Prostate gland (tissue), 2 donors: ENCODE measurements at regions of chr15 and their contacts with region 1.

Region 1: GRCh38 chr15:71455107-71455506 is 339.8 kb downstream of the THSD4 start:
- DNase-seq: peak; percentile 36
- H3K4me3 ChIP-seq: no peak overlapping the region
- H3K27ac ChIP-seq: peak overlapping the region; percentile 20 to 55
- H3K4me1 ChIP-seq: peaks cover 3% of the 10 kb centered on the region
- H3K27me3 ChIP-seq: no peaks in the 10 kb centered on the region
- CTCF ChIP-seq: no peak
- POLR2A ChIP-seq: no peak

Region 2: GRCh38 chr15:72155635-72156616 is 700.8 kb after region 1 on chr15:
- intact Hi-C with region 1: loop called (anchors 10 kb)
- DNase-seq: peak; percentile 93
- H3K4me3 ChIP-seq: peak overlapping the region; percentile 36
- H3K27ac ChIP-seq: peak overlapping the region; percentile 88 to 94
- H3K4me1 ChIP-seq: peaks cover 10% of the 10 kb centered on the region
- H3K27me3 ChIP-seq: no peaks in the 10 kb centered on the region
- CTCF ChIP-seq: peak; percentile 46 to 95 (median 88)
- POLR2A ChIP-seq: no peak